H1 (cell line): ENCODE measurements at regions of chr12 and their contacts with region 1.

Region 1: DNA sequence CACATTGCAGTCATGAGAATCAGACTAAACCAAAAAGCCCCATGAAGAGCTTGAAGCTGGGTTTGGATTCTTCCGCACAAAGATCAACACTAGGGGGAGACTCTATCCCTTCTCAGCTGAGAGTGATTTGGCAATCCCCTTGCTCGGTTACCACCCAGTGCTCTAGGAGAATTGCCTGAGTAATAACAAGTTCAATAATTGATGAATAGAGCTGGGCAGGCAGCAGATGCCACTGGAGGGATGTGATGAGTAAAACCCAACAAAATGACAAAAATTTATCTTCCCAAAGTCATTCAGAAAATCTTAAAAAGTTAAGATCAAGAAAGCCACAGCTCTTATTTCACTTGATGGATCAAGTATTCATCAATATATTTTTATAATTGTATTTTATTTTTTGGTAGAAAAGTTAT is 185.6 kb upstream of the ARID2 start:
- DNase-seq: peak in 1 of 2 experiments; percentile 23
- H3K4me3 ChIP-seq: no peak overlapping the region
- H3K27ac ChIP-seq: no peak overlapping the region
- H3K4me1 ChIP-seq: no peaks in the 10 kb centered on the region
- H3K27me3 ChIP-seq: no peaks in the 10 kb centered on the region
- CTCF ChIP-seq: peak; percentile 39 to 82 (median 81)
- EP300 ChIP-seq: no peak
- POLR2A ChIP-seq: no peak
- RAD21 ChIP-seq: peak; percentile 86 to 95

Region 2: DNA sequence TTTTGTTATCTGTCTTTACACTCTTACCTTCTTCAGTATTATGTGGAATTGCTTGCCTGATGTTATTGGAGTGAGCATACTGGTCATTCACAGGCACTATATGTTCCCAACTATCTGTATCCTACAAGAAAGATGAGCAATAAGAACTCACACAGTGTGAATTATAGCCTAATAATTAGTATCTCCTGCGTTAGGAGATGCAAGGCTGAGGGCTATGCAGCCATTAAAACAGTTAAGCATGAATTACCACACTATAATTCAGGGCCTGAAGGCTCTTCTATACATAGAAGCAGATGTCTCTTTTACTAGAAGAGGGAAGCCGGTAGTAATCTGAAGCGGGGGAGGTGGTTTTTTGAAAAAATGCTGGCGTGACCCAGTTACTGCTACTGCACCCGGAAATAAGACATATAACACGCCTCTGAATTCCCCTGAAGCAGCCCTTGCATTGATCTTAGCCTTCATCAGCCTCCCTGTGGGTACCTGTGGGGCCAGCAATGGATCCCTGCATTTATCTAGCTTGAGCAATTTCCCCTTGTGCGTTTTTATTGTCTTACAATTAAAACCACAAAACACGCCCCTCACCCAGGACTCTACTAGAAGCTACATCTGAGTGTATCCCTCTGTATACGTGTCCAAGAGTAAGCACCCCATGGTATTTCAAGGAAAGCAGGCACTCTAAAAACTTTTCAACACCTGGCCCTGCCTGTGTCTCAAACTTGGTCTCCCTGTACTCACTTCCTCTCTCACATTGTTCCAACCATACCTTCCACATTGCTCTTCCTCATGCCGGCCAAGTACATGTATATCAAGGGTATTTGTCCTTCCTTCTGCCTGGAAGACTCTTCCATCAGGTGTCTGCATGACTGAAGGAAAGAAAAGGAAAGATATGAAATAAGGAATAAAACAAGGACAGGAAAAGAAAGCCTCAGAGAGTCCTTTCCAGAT is 25.3 kb before region 1 on chr12:
- CTCF ChIA-PET with region 1: no interaction called
- POLR2A ChIA-PET with region 1: no interaction called
- DNase-seq: no peak
- H3K4me3 ChIP-seq: no peak overlapping the region
- H3K27ac ChIP-seq: no peak overlapping the region
- H3K4me1 ChIP-seq: no peaks in the 10 kb centered on the region
- H3K27me3 ChIP-seq: no peaks in the 10 kb centered on the region
- CTCF ChIP-seq: no peak
- EP300 ChIP-seq: no peak
- POLR2A ChIP-seq: no peak
- RAD21 ChIP-seq: no peak

Region 3: GRCh38 chr12:45532113-45532512 is 11.8 kb before region 1 on chr12:
- CTCF ChIA-PET with region 1: interaction called, 26 read pairs
- POLR2A ChIA-PET with region 1: interaction called, 3 read pairs
- DNase-seq: no peak
- H3K4me3 ChIP-seq: no peak overlapping the region
- H3K27ac ChIP-seq: no peak overlapping the region
- H3K4me1 ChIP-seq: peaks cover 0 to 4% (median 0%) of the 10 kb centered on the region in 4 experiments; a peak in 1 of 7 replicates
- H3K27me3 ChIP-seq: no peaks in the 10 kb centered on the region
- CTCF ChIP-seq: no peak
- EP300 ChIP-seq: no peak
- POLR2A ChIP-seq: no peak
- RAD21 ChIP-seq: peak in 1 of 2 experiments; percentile 16; a peak in 3 of 4 replicates

Region 4: DNA sequence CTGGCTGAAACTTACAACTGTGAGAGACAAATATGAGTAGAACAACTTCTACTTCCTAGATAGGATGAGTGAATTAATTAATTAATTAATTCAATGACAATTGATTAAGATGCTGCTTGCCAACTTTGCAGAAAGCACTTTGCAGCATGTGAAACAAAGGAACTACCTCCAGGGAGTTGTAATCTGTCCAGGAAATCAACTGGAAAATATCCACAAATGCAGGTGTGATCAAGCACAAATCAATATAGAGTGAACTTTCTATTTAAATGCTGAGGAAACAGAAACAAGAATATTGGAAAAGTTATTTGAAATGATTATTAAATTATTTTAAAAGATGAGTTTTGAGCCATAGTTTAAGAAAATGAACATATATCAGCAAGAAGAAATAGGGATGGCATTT is 21.7 kb after region 1 on chr12:
- CTCF ChIA-PET with region 1: interaction called, 13 read pairs
- POLR2A ChIA-PET with region 1: interaction called, 3 read pairs
- DNase-seq: no peak
- H3K4me3 ChIP-seq: no peak overlapping the region
- H3K27ac ChIP-seq: no peak overlapping the region
- H3K4me1 ChIP-seq: no peaks in the 10 kb centered on the region
- H3K27me3 ChIP-seq: no peaks in the 10 kb centered on the region
- CTCF ChIP-seq: no peak
- EP300 ChIP-seq: no peak
- POLR2A ChIP-seq: no peak
- RAD21 ChIP-seq: no peak

Region 5: GRCh38 chr12:45728630-45729232 is 184.8 kb after region 1 on chr12:
- CTCF ChIA-PET with region 1: interaction called, 43 read pairs
- POLR2A ChIA-PET with region 1: interaction called, 19 read pairs
- DNase-seq: peak; percentile 90 to 94
- H3K4me3 ChIP-seq: peak overlapping the region; percentile 62 to 93 (median 92)
- H3K27ac ChIP-seq: peak overlapping the region; percentile 44; the same call in 1 of the 2 replicates
- H3K4me1 ChIP-seq: no peaks in the 10 kb centered on the region; a peak in 1 of 7 replicates
- H3K27me3 ChIP-seq: no peaks in the 10 kb centered on the region
- CTCF ChIP-seq: peak; percentile 91 to 96 (median 93)
- EP300 ChIP-seq: peak; percentile 9 to 89; a peak in 2 of 3 replicates
- POLR2A ChIP-seq: peak; percentile 92
- RAD21 ChIP-seq: peak; percentile 38 to 67; a peak in 3 of 4 replicates